ENCODE measurements at regions of chr2 and their contacts with region 1.

Region 1: DNA sequence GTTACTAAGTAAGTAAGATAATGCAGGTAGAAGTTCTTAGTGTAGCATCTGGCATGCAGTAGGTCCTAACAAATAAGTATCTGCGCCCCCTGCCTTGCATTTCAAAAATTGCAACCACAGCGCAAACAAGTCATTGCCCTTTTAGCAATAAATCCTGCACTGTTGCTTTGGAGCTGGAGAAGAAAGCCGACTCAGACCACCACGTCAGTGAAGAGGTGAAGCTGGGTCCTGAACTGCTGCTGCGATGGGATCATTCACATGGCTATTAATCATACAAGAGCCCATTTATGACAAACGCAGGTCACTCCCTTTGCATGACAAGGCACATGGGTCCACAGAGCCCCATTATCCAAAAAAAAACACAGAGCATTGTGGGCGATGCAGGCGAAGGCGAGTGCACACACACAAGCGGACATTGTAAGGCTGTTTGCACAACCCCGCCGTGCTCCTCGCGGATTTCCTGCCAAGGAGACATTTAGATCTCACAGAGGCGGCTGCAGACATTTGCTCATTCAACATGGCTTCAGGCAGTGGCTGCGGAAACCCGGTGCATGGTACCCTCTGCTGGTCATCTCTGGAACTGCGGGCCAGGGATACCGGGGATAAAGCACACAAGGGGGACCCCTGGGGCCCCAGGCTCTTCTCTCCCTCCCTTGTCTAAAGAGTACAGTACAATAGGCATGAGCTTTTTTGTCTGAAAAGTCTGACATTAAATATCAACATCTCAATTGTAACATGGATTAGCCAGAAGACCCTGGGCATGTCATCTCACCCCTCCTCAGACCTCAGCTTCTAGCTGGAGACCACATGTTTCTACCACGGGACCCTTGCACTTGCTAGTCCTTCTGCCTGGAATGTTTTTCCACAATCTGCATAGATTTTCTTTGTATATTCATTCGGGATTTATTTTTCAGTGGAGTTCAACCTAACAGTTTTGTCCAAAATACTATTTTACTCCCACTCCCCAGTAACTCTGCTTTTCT is 56.7 kb downstream of the CYRIA start:
- DNase-seq: peak; percentile 67
- ATAC-seq: peak; percentile 98
- H3K4me3 ChIP-seq: peak overlapping the region; percentile 42 to 70 (median 45)
- H3K27ac ChIP-seq: no peak overlapping the region
- H3K4me1 ChIP-seq: 0 out of 2 replicates have a peak, but pooled peaks cover 4% of the 10 kb centered on the region
- H3K27me3 ChIP-seq: no peaks in the 10 kb centered on the region; a peak in 1 of 5 replicates
- CTCF ChIP-seq: peak; percentile 85
- EP300 ChIP-seq: 0 out of 4 replicates have a peak, but pooled peaks of 1 of the 2 experiments have one; percentile 11
- POLR2A ChIP-seq: no peak
- RAD21 ChIP-seq: peak; percentile 80

Region 2: DNA sequence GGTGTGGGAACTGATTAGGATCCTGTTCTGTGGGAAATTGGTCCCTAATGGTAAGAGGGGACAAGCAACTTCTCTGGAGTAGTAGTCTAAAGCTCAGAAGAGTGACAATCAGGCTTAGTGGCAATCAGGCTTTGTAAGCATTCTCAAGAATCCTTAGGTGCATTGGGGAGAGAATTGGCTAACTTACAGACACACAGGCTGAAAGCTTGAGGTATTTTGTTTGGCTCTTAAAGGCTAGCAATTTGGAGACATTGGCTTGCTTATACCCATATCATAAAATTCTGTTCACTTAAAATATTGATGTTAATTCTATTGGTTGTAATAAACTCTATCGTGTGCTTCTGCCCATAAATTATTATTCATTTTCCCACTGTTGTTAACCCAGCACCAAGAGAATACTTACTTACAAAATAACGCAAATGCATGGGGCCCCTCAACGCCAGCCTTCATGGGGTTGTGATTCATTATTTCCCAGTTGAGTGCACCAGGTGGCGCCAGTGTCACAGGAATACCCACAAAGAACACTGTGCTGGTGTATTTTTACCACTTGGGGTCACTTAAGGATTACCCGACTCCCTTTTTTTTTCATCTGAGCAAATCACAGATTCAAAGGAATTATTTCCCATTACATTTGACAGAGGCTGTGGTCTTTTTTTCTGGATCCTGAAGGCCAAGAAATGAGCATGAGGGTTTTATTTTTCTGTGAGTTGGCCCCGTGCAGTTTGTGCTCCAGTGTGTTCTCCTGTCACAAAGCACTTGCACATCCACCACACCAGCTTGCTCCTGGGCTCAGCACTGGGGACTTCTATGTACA is 971.8 kb before region 1 on chr2:
- CTCF ChIA-PET with region 1: interaction called, 3 read pairs
- POLR2A ChIA-PET with region 1: no interaction called
- in situ Hi-C with region 1: no loop called
- intact Hi-C with region 1: loop called (anchors 2 kb)
- DNase-seq: peak; percentile 71
- ATAC-seq: peak; percentile 84
- H3K4me3 ChIP-seq: no peak overlapping the region
- H3K27ac ChIP-seq: peak overlapping the region; percentile 2
- H3K4me1 ChIP-seq: peaks cover 37% of the 10 kb centered on the region
- H3K27me3 ChIP-seq: no peaks in the 10 kb centered on the region
- CTCF ChIP-seq: peak; percentile 91
- EP300 ChIP-seq: no peak
- POLR2A ChIP-seq: no peak
- RAD21 ChIP-seq: peak; percentile 94

Region 3: GRCh38 chr2:16525265-16525887 is 83.6 kb before region 1 on chr2:
- CTCF ChIA-PET with region 1: interaction called, 21 read pairs
- POLR2A ChIA-PET with region 1: no interaction called
- in situ Hi-C with region 1: no loop called
- intact Hi-C with region 1: loop called (anchors 1 kb)
- DNase-seq: peak; percentile 49
- ATAC-seq: peak; percentile 79
- H3K4me3 ChIP-seq: no peak overlapping the region
- H3K27ac ChIP-seq: no peak overlapping the region
- H3K4me1 ChIP-seq: no peaks in the 10 kb centered on the region
- H3K27me3 ChIP-seq: no peaks in the 10 kb centered on the region
- CTCF ChIP-seq: peak; percentile 81
- EP300 ChIP-seq: no peak
- POLR2A ChIP-seq: no peak
- RAD21 ChIP-seq: no peak

Region 4: GRCh38 chr2:16553226-16553625 is 55.7 kb before region 1 on chr2:
- CTCF ChIA-PET with region 1: interaction called, 65 read pairs
- POLR2A ChIA-PET with region 1: no interaction called
- in situ Hi-C with region 1: loop called (anchors 5 kb)
- intact Hi-C with region 1: loop called (anchors 1 kb)
- DNase-seq: peak; percentile 40
- ATAC-seq: peak; percentile 84
- H3K4me3 ChIP-seq: no peak overlapping the region
- H3K27ac ChIP-seq: no peak overlapping the region
- H3K4me1 ChIP-seq: no peaks in the 10 kb centered on the region
- H3K27me3 ChIP-seq: no peaks in the 10 kb centered on the region
- CTCF ChIP-seq: peak; percentile 63
- EP300 ChIP-seq: no peak
- POLR2A ChIP-seq: no peak
- RAD21 ChIP-seq: peak; percentile 50; the same call in 1 of the 2 replicates

Region 5: GRCh38 chr2:16591370-16591933 is 17.5 kb before region 1 on chr2:
- CTCF ChIA-PET with region 1: no interaction called
- POLR2A ChIA-PET with region 1: no interaction called
- in situ Hi-C with region 1: no loop called
- intact Hi-C with region 1: no loop called
- DNase-seq: no peak
- ATAC-seq: no peak
- H3K4me3 ChIP-seq: no peak overlapping the region
- H3K27ac ChIP-seq: no peak overlapping the region
- H3K4me1 ChIP-seq: no peaks in the 10 kb centered on the region
- H3K27me3 ChIP-seq: no peaks in the 10 kb centered on the region
- CTCF ChIP-seq: no peak
- EP300 ChIP-seq: no peak
- POLR2A ChIP-seq: no peak
- RAD21 ChIP-seq: no peak

Region 6: GRCh38 chr2:16756831-16757644 is 148.1 kb after region 1 on chr2:
- CTCF ChIA-PET with region 1: interaction called, 23 read pairs
- POLR2A ChIA-PET with region 1: no interaction called
- in situ Hi-C with region 1: loop called (anchors 5 kb)
- intact Hi-C with region 1: loop called (anchors 1 kb)
- DNase-seq: peak; percentile 59
- ATAC-seq: peak; percentile 98
- H3K4me3 ChIP-seq: no peak overlapping the region
- H3K27ac ChIP-seq: no peak overlapping the region
- H3K4me1 ChIP-seq: no peaks in the 10 kb centered on the region
- H3K27me3 ChIP-seq: peaks cover 0 to 9% of the 10 kb centered on the region in 2 experiments; a peak in 2 of 5 replicates
- CTCF ChIP-seq: peak; percentile 98
- EP300 ChIP-seq: no peak
- POLR2A ChIP-seq: no peak
- RAD21 ChIP-seq: peak; percentile 84

Region 7: GRCh38 chr2:16900405-16901025 is 291.6 kb after region 1 on chr2:
- CTCF ChIA-PET with region 1: interaction called, 6 read pairs
- POLR2A ChIA-PET with region 1: no interaction called
- in situ Hi-C with region 1: no loop called
- intact Hi-C with region 1: loop called (anchors 2 kb)
- DNase-seq: peak; percentile 55
- ATAC-seq: peak; percentile 98
- H3K4me3 ChIP-seq: no peak overlapping the region
- H3K27ac ChIP-seq: no peak overlapping the region
- H3K4me1 ChIP-seq: no peaks in the 10 kb centered on the region
- H3K27me3 ChIP-seq: no peaks in the 10 kb centered on the region
- CTCF ChIP-seq: peak; percentile 82
- EP300 ChIP-seq: no peak
- POLR2A ChIP-seq: no peak
- RAD21 ChIP-seq: peak; percentile 73